ENCODE measurements at regions of chr21 and their contacts with region 1.

Region 1: GRCh38 chr21:42227909-42228708 is 9.2 kb downstream of the ABCG1 start:
- DNase-seq: peak; percentile 94

Region 2: GRCh38 chr21:42171091-42172053 is 56.7 kb before region 1 on chr21:
- intact Hi-C with region 1: loop called (anchors 2 kb)
- DNase-seq: peak; percentile 87

Region 3: GRCh38 chr21:42209819-42210479 is 18.2 kb before region 1 on chr21:
- intact Hi-C with region 1: no loop called
- DNase-seq: peak; percentile 36

Region 4: GRCh38 chr21:42309753-42310221 is 81.7 kb after region 1 on chr21:
- intact Hi-C with region 1: loop called (anchors 10 kb)
- DNase-seq: peak; percentile 81

Region 5: DNA sequence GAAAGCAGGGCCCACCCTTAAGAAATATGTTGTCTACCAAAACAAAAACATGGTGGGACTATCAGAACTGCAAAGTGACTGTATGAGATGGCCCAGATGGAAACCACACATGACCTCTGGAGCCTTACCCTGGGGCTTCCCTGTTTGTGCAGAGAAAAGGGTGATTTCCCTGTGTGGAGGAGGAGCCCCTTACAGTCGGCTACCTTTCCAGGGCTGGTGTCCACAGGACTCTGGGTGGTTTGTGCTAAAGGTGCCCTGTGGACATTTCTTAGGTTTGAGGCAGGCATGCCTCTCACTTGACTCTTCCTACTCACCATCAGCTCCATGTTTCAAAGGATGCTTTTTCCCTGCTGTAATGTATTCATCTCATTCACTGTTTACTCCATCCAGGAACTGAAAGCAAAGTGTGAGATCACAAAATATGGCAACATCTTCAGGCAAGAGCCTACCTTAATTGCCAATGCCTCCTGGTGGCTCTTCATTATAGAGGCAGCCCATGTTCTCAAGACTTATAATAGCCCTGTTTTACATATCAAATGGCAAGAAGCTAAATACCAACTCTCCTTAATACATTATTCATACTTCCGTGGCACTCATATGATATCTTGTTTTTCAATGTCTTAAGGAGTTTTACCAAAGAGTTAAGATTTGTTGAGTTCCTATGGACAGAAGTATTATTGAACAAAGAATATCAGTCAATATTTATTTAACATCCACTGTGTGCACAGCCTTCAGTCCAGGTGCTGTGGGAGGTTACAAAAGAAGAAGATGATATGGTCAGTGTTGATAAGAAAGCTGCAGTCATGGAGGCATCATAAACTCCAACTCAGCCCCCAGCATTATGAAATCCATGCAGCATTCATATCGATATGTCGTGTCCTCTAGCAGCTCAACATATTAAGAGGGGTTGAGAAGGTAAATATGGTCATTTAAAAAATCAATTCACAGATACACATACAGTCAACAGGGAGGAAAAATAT is 102.6 kb after region 1 on chr21:
- intact Hi-C with region 1: no loop called
- DNase-seq: no peak

Measured in cardiac septum (tissue), 1 donor.